ENCODE measurements at regions of chr15 and their contacts with region 1.

Region 1: DNA sequence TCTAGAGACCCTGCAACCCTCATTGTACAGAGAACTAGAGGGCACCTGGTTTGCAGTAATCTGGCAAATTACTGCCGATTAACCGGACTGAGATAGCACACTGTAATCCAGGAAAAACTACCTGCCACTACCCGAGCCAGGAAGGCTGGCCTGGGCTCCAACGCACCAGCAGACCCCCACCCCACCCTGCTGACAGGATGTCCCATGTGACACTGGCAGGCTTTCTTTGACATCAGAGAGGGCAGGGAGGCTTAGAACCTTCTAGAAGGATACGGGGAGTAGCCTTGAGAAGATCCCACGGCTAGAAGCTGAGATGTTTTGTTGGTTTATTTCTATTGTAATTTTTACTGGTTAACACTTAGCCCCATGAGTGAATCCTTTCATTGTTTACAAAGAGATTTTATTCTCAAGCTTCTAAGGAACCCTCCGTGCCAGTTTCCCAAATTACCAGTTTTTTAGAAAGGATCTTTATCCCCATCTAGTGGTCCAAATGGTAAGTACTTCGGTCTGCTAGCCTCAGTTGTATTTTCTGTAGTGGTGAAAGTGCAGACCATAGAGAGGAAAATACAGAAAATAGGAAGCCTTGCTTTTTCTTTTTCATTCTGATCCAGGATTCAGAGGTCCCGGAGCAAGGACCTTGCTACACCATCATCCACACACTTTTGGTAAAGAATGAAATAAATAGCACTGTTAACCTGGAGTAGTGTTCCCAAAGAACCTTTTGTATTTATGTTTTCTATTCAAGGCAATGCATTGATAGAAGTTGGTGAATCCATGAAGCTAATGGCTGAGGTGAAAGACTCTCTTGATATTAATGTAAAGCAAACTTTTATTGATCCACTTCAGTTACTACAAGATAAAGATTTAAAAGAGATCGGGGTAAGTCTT is 81.9 kb upstream of the ADAMTSL3 start:
- DNase-seq: peak; percentile 22 to 29
- ATAC-seq: peak in 1 of 2 experiments; percentile 69; a peak in 2 of 6 replicates
- H3K4me3 ChIP-seq: no peak overlapping the region
- H3K27ac ChIP-seq: no peak overlapping the region
- H3K4me1 ChIP-seq: no peaks in the 10 kb centered on the region
- CTCF ChIP-seq: peak; percentile 61
- EP300 ChIP-seq: no peak
- POLR2A ChIP-seq: no peak
- RAD21 ChIP-seq: peak; percentile 53 to 55

Region 2: DNA sequence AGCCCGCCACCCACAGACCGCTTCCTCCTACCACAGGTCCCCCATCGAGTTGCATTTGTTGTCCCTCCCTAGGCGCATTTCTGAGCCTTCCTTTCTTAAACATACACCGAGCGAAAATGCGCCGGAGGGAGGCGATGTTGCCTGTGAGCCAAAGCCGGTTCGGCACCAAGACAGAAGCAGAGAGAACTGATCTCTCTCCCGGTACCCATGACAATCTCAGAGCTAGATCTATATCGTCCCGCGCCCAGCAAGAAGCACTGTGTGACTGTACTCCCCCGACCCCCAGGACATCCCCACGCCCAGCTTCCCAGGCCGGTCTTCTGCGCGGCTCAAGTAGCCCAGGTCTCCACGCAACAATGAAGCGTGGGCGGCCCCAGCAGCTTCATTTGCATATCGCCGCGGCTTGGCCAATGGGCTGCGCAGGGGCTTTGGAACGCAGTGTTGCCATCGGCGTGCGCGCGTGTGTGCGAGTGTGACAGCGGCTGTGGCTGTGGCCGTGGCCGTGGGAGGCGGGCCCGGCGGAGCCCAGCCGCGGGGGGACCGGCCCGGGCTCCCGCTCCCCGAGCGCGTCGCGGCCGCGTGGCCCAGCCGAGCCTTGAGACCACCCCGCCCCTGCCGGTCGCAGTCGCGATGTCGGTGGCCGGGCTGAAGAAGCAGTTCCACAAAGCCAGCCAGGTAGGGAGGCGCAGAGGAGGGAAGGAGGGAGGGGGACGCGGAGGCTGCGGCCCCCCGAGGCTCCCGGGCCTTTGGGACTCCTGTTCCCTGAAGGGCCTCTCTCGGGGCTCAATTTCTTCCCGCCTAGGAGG is 125.0 kb before region 1 on chr15 and contains the start of gene SH3GL3:
- CTCF ChIA-PET with region 1: interaction called, 17 read pairs
- POLR2A ChIA-PET with region 1: no interaction called
- DNase-seq: peak; percentile 63 to 73
- ATAC-seq: peak; percentile 87 to 93
- H3K4me3 ChIP-seq: peak within 1 kb of the TSS; percentile 64
- H3K27ac ChIP-seq: peak within 1 kb of the TSS in 1 of 2 experiments; percentile 56; a peak in 3 of 6 replicates
- H3K4me1 ChIP-seq: 0 out of 3 replicates have a peak, but pooled peaks cover 4% of the 10 kb centered on the region
- CTCF ChIP-seq: peak; percentile 55
- EP300 ChIP-seq: no peak
- POLR2A ChIP-seq: no peak
- RAD21 ChIP-seq: peak; percentile 50 to 56; a peak in 4 of 5 replicates
- polyA plus RNA-seq, gene SH3GL3: 0.19 TPM in 1 of 2 replicates, not detected in the other

Region 3: DNA sequence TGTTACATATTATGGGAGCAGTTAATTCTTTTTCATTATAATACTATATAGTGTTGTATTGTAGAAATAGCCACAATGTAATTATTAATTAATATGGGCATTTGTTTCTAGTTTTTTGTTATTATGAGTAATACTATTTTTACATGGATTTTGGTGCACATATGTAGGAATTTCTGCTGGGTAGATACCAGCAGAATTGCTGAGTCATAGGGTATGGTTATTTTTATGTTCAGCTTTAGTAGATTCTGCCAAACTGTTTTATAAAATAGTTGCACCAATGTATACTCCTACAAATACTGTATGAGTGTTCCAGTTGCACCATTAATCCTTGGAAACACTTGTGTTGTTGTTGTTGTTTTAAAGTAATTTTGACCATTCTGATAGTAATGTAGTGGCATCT is 33.4 kb before region 1 on chr15:
- CTCF ChIA-PET with region 1: no interaction called
- POLR2A ChIA-PET with region 1: no interaction called
- DNase-seq: no peak
- ATAC-seq: no peak
- H3K4me3 ChIP-seq: no peak overlapping the region
- H3K27ac ChIP-seq: no peak overlapping the region
- H3K4me1 ChIP-seq: no peaks in the 10 kb centered on the region
- CTCF ChIP-seq: no peak
- EP300 ChIP-seq: no peak
- POLR2A ChIP-seq: no peak
- RAD21 ChIP-seq: no peak

Region 4: GRCh38 chr15:83559310-83559966 is 12.6 kb before region 1 on chr15:
- CTCF ChIA-PET with region 1: interaction called, 76 read pairs
- POLR2A ChIA-PET with region 1: no interaction called
- DNase-seq: peak; percentile 70 to 76
- ATAC-seq: peak; percentile 86 to 98
- H3K4me3 ChIP-seq: no peak overlapping the region
- H3K27ac ChIP-seq: no peak overlapping the region
- H3K4me1 ChIP-seq: no peaks in the 10 kb centered on the region
- CTCF ChIP-seq: peak; percentile 94
- EP300 ChIP-seq: no peak
- POLR2A ChIP-seq: no peak
- RAD21 ChIP-seq: peak; percentile 92 to 95

Region 5: GRCh38 chr15:83585601-83586335 is 13.7 kb after region 1 on chr15:
- CTCF ChIA-PET with region 1: interaction called, 23 read pairs
- POLR2A ChIA-PET with region 1: no interaction called
- DNase-seq: no peak
- ATAC-seq: no peak
- H3K4me3 ChIP-seq: no peak overlapping the region
- H3K27ac ChIP-seq: no peak overlapping the region
- H3K4me1 ChIP-seq: no peaks in the 10 kb centered on the region
- CTCF ChIP-seq: no peak
- EP300 ChIP-seq: no peak
- POLR2A ChIP-seq: no peak
- RAD21 ChIP-seq: no peak

Region 6: GRCh38 chr15:83644439-83644838 is 72.4 kb after region 1 on chr15:
- CTCF ChIA-PET with region 1: no interaction called
- POLR2A ChIA-PET with region 1: no interaction called
- DNase-seq: no peak
- ATAC-seq: no peak
- H3K4me3 ChIP-seq: no peak overlapping the region
- H3K27ac ChIP-seq: no peak overlapping the region
- H3K4me1 ChIP-seq: no peaks in the 10 kb centered on the region
- CTCF ChIP-seq: no peak
- EP300 ChIP-seq: no peak
- POLR2A ChIP-seq: no peak
- RAD21 ChIP-seq: no peak

Region 7: DNA sequence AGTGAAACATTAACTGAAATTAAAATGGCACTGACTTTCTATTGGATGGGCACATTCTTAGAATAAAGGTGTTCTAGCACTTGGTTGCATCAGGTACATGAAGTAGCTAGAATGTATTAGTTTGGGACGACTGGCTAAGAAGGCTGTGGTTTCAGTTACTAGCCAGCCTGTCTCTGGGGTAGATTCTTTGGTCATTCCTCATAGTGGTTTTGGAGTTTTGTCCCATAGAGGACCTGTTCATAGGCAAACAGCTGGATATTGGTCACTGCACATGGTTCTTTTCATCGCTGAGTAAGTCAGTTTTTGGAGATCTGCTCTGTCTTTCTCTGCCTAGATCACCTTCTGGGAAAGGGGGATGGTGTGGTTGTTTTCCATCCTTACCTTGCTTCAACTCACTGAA is 137.2 kb after region 1 on chr15:
- CTCF ChIA-PET with region 1: no interaction called
- POLR2A ChIA-PET with region 1: no interaction called
- DNase-seq: no peak
- ATAC-seq: no peak
- H3K4me3 ChIP-seq: no peak overlapping the region
- H3K27ac ChIP-seq: no peak overlapping the region
- H3K4me1 ChIP-seq: no peaks in the 10 kb centered on the region
- CTCF ChIP-seq: no peak
- EP300 ChIP-seq: no peak
- POLR2A ChIP-seq: no peak
- RAD21 ChIP-seq: no peak

Measured in A549 (cell line).